Prostate gland (tissue), 2 donors: ENCODE measurements at regions of chr11 and their contacts with region 1.

Region 1: DNA sequence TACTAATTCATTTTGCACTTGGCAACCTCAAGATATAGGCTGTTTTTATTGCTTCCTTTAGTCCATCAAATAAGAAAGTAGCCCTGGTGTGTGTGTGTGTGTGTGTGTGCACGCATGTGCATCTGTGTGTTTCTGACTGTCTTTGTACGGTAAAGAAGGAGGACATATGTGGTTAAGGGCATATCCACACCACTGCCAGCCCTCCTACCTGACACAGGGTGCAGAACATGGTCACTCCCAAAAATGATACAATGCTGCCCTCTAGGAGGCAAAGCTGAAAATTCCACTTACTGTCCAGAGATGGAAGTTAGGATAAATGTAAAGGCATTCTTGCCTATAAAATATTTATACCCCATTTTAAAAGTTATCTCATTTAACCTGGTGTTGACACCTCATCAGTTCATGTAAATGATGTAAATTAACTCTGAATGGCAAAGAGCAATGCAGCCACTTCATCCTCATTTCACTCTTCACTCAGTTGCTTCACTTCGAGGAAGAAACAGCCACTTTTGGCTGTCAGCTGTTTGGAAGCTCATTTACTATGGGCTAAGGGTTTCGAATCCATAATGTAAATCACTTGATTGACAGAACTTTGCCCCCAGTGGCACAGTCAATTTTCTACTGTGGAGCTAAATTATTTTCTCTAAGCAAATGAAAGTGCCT is 83.1 kb upstream of the MTNR1B start:
- DNase-seq: peak; percentile 67
- H3K4me3 ChIP-seq: no peak overlapping the region
- H3K27ac ChIP-seq: no peak overlapping the region
- H3K4me1 ChIP-seq: no peaks in the 10 kb centered on the region
- H3K27me3 ChIP-seq: no peaks in the 10 kb centered on the region
- CTCF ChIP-seq: peak; percentile 22 to 77 (median 57)
- POLR2A ChIP-seq: no peak

Region 2: DNA sequence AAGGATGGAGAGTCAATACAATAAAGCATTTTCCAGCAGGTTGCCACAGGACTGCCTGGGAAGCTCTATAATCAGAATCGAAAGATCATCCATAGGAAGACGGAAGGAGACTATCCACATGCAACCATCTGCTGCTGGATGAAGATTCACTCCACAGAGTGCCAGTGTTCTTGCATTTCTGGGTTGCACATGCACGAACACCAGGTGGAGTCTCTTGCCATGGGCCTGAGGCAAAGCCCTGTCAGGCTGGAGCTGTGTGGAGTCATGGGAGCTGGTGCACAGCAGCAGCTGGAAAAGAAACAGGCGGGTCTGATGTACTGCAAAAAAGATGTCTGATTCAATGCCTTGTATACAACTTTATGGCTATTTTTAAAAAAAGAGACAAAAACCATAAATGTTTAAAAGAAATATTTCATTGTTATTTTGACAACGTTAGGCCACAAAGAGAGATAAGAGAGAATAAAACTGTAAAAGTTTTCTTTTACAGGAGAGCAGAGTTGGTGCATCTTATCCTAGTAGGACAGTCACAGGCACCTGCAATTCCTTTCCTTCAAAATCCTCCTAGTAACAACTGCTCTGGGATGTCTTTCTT is 674.7 kb before region 1 on chr11:
- intact Hi-C with region 1: loop called (anchors 5 kb)
- DNase-seq: peak; percentile 19
- H3K4me3 ChIP-seq: no peak overlapping the region
- H3K27ac ChIP-seq: no peak overlapping the region
- H3K4me1 ChIP-seq: no peaks in the 10 kb centered on the region
- H3K27me3 ChIP-seq: no peaks in the 10 kb centered on the region
- CTCF ChIP-seq: peak in 3 of 4 experiments; percentile 7 to 43 (median 29)
- POLR2A ChIP-seq: no peak

Region 3: GRCh38 chr11:92329646-92330045 is 556.7 kb before region 1 on chr11:
- intact Hi-C with region 1: loop called (anchors 10 kb)
- DNase-seq: peak; percentile 14
- H3K4me3 ChIP-seq: no peak overlapping the region
- H3K27ac ChIP-seq: no peak overlapping the region
- H3K4me1 ChIP-seq: no peaks in the 10 kb centered on the region
- H3K27me3 ChIP-seq: no peaks in the 10 kb centered on the region
- CTCF ChIP-seq: no peak
- POLR2A ChIP-seq: no peak